ENCODE measurements at regions of chr5 and their contacts with region 1.

Region 1: GRCh38 chr5:80268916-80269315 is 13.1 kb upstream of the SERINC5 start:
- DNase-seq: no peak
- H3K4me3 ChIP-seq: no peak overlapping the region
- H3K4me3 Mint-ChIP-seq: no peak overlapping the region
- H3K27ac ChIP-seq: no peak overlapping the region
- H3K27ac Mint-ChIP-seq: no peak overlapping the region
- H3K4me1 ChIP-seq: peaks cover 7 to 8% of the 10 kb centered on the region in 2 donors
- H3K4me1 Mint-ChIP-seq: peaks cover 16% of the 10 kb centered on the region
- H3K27me3 ChIP-seq: no peaks in the 10 kb centered on the region
- H3K27me3 Mint-ChIP-seq: peaks cover 0 to 2% (median 1%) of the 10 kb centered on the region in 3 donors
- CTCF ChIP-seq: no peak

Region 2: GRCh38 chr5:80141147-80141671 is 127.7 kb before region 1 on chr5:
- intact Hi-C with region 1: loop called in 1 of 2 experiments (anchors 5 kb)
- DNase-seq: peak; percentile 74 to 87 (median 83)
- H3K4me3 ChIP-seq: peak overlapping the region in 1 of 3 experiments; percentile 37
- H3K4me3 Mint-ChIP-seq: peak overlapping the region; percentile 43 to 77
- H3K27ac ChIP-seq: peak overlapping the region; percentile 85 to 92
- H3K27ac Mint-ChIP-seq: peak overlapping the region; percentile 89 to 96 (median 94)
- H3K4me1 ChIP-seq: peaks cover 88 to 98% of the 10 kb centered on the region in 2 donors
- H3K4me1 Mint-ChIP-seq: peaks cover 92% of the 10 kb centered on the region
- H3K27me3 ChIP-seq: no peaks in the 10 kb centered on the region
- H3K27me3 Mint-ChIP-seq: no peaks in the 10 kb centered on the region
- CTCF ChIP-seq: no peak

Region 3: GRCh38 chr5:80216753-80217596 is 51.9 kb before region 1 on chr5:
- intact Hi-C with region 1: no loop called
- DNase-seq: no peak
- H3K4me3 ChIP-seq: no peak overlapping the region
- H3K4me3 Mint-ChIP-seq: no peak overlapping the region
- H3K27ac ChIP-seq: no peak overlapping the region
- H3K27ac Mint-ChIP-seq: peak overlapping the region in 1 of 7 donors; percentile 88
- H3K4me1 ChIP-seq: peaks cover 14 to 27% of the 10 kb centered on the region in 2 donors
- H3K4me1 Mint-ChIP-seq: peaks cover 41% of the 10 kb centered on the region
- H3K27me3 ChIP-seq: no peaks in the 10 kb centered on the region
- H3K27me3 Mint-ChIP-seq: peaks cover 0 to 2% (median 1%) of the 10 kb centered on the region in 3 donors
- CTCF ChIP-seq: no peak

Measured in CD14-positive monocyte (primary cell).